ENCODE measurements at regions of chr3 and their contacts with region 1.

Region 1: DNA sequence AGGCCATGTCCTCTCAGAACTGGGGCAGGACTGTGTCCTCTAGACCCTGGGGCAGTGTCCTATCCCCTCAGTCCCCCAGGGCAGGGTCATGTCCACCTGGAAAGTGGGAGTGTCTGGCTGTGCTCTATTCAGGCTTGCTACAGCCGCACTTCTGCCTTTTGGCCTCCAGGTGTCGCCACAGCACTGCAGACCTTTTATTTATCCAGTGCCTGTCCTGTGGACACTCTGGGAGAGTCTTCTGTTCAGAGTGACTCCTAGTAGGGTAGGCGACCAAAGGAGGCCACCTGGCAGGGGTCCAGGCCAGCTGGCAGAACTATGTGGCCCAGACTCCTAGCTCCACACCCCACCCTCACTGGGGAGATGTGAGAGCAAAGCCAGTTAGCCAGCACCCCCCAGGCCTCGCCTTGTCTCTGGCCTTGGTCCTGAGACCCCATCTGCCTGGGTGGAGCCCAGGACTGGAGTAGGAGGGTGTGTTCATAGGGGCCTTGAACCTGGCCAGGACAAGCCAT is 3.9 kb downstream of the TMIE start:
- DNase-seq: peak; percentile 73
- H3K4me3 ChIP-seq: no peak overlapping the region
- H3K27ac ChIP-seq: no peak overlapping the region
- H3K4me1 ChIP-seq: no peaks in the 10 kb centered on the region; the same call in 1 of the 2 replicates
- H3K27me3 ChIP-seq: peaks cover 8% of the 10 kb centered on the region

Region 2: GRCh38 chr3:46284981-46285683 is 419.9 kb before region 1 on chr3:
- in situ Hi-C with region 1: no loop called
- DNase-seq: no peak
- H3K4me3 ChIP-seq: no peak overlapping the region
- H3K27ac ChIP-seq: no peak overlapping the region
- H3K4me1 ChIP-seq: no peaks in the 10 kb centered on the region
- H3K27me3 ChIP-seq: peaks cover 7% of the 10 kb centered on the region; the same call in 1 of the 2 replicates

Region 3: GRCh38 chr3:47047673-47048072 is 342.6 kb after region 1 on chr3:
- in situ Hi-C with region 1: no loop called
- DNase-seq: peak; percentile 12
- H3K4me3 ChIP-seq: no peak overlapping the region
- H3K27ac ChIP-seq: no peak overlapping the region
- H3K4me1 ChIP-seq: no peaks in the 10 kb centered on the region
- H3K27me3 ChIP-seq: no peaks in the 10 kb centered on the region

Region 4: DNA sequence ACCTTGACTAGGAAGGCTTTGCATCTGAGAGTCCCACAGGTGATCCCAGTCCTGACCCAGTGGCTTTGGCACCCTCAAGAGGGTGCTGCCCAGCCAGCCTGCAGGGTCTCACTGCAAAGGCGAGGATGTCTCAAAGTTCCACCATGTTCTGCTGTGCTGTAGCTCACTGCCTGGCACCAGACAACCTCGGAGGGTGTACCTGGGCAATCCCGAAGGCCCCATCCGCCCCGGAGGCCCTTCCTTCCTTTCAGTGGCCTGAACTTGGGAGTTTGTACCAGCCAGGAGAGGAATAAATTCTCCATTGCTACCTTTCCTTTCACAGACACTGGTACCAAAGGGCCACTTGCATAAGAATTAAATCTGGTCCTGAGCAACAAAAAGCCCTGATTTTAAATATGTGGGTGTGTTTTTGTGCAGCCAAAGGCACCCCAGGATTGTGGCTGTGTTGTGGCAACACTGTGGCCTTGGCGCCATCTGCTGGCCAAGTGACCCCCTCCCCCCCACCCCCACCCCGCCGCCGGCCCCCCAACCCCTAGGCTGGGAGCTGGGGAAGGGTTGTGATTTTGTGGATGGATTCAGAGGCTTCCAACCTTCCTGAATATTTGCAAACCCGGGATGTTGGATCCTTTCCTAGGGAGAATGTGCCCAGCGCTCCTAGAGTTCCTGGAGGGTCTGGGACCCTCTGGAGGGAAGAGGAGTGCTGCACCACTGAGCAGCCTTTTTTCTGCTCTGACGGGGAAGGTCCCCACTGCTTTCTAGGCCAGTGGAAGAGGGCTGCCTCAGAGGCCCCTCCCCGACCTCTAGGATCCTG is 666.0 kb after region 1 on chr3:
- in situ Hi-C with region 1: loop called (anchors 25 kb)
- DNase-seq: peak; percentile 39
- H3K4me3 ChIP-seq: no peak overlapping the region
- H3K27ac ChIP-seq: no peak overlapping the region
- H3K4me1 ChIP-seq: peaks cover 2% of the 10 kb centered on the region; the same call in 1 of the 2 replicates
- H3K27me3 ChIP-seq: no peaks in the 10 kb centered on the region